ENCODE measurements at regions of chr20 and their contacts with region 1.

Region 1: GRCh38 chr20:44885392-44886265 is at the start of gene YWHAB:
- DNase-seq: peak; percentile 95 to 99 (median 98)
- ATAC-seq: peak; percentile 94
- H3K4me3 ChIP-seq: peak within 1 kb of the TSS; percentile 87 to 90
- H3K4me3 Mint-ChIP-seq: peak within 1 kb of the TSS; percentile 92
- H3K27ac ChIP-seq: peak within 1 kb of the TSS; percentile 88 to 92
- H3K27ac Mint-ChIP-seq: peak within 1 kb of the TSS; percentile 97
- H3K4me1 ChIP-seq: peaks cover 43% of the 10 kb centered on the region
- H3K4me1 Mint-ChIP-seq: peaks cover 71% of the 10 kb centered on the region
- H3K27me3 ChIP-seq: no peaks in the 10 kb centered on the region
- H3K27me3 Mint-ChIP-seq: no peaks in the 10 kb centered on the region
- CTCF ChIP-seq: no peak
- total RNA-seq, gene YWHAB: 124 to 136 TPM

Region 2: DNA sequence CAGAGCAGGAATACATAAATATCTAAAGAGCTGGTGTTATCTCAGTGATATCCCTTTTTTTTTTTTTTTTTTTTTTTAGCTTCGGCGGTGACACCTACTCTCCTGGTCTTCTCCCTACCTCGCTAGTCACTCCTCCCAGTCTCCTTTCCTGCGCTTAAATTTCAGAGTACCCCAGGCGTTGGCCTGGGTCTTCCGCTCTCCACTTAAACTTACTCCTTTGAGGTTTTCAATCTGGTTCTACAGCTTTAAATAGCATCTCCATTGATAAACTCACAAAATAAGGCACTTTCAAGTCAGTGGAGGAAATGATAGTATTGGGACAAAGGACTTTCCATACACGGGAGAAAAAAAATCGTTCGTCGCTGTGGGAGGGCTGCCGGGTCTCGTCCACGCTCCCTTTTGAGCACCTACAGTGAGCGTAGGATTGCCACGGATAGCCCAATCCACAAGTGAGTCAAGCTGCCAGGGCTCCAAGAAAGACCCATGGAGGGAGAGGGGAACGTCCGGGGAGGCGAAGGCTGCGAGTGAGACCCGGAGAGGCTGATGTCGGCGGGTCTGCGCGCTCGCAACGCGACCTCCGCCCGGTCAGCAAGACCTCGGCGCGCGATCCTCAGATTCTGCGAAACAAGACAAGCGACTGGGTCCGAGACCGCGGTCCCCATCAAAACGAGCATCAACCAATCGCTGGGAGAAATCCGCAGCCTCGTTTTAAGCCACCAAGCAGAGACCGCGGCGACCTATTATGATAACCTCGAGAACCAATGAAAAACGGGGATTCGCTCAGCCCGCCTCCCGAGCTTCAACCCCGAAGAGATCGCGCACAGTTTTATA is 1428.6 kb before region 1 on chr20:
- CTCF ChIA-PET with region 1: no interaction called
- POLR2A ChIA-PET with region 1: no interaction called
- intact Hi-C with region 1: loop called (anchors 5 to 10 kb)
- DNase-seq: peak; percentile 68 to 94 (median 87)
- ATAC-seq: peak; percentile 79
- H3K4me3 ChIP-seq: peak overlapping the region; percentile 97 to 100
- H3K4me3 Mint-ChIP-seq: peak overlapping the region; percentile 92
- H3K27ac ChIP-seq: peak overlapping the region; percentile 98 to 100
- H3K27ac Mint-ChIP-seq: peak overlapping the region; percentile 98
- H3K4me1 ChIP-seq: peaks cover 16% of the 10 kb centered on the region
- H3K4me1 Mint-ChIP-seq: peaks cover 36% of the 10 kb centered on the region
- H3K27me3 ChIP-seq: no peaks in the 10 kb centered on the region
- H3K27me3 Mint-ChIP-seq: peaks cover 8% of the 10 kb centered on the region
- CTCF ChIP-seq: no peak

Region 3: DNA sequence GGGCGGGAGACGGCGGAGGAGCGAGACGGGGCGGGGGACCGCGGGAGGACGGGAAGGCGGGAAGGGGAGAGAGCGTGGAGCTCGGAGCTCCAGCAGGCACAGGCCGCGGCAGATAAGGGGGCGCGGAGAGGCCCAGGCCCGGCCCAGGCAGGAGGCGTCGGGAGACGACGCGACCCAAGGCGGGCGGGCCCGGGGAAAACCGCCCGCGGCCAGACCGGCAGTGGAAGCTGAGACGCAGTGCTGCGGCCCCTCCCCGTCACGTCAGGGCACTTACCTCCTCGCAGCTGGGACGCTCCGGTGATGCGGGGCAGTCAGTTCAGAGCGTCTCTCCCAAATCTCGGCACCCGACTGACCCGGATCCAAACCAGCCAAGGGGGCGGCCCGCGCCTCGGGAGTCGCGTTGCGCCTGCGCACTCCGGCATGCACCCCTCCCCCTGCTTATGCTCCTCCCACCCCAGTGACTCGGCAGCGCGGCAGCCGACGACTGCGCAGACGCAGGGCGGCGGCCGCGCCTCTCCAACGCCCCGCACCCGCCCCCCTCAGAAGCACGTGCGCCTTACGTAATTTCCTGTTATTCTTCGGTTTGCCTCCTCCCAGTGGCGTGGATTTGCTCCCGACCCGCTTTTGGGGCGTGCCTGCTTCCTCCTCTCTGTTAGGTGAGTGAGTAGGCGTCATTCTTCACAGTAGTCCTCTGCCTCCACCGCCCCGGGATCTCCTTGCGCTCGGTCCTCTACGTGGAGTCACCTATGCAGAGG is 675.0 kb before region 1 on chr20 and contains the start of gene OSER1:
- CTCF ChIA-PET with region 1: interaction called, 3 read pairs
- POLR2A ChIA-PET with region 1: no interaction called
- intact Hi-C with region 1: loop called (anchors 1 to 2 kb)
- DNase-seq: peak; percentile 97 to 99 (median 98)
- ATAC-seq: peak; percentile 83
- H3K4me3 ChIP-seq: peak within 1 kb of the TSS; percentile 78 to 91
- H3K4me3 Mint-ChIP-seq: peak within 1 kb of the TSS; percentile 96
- H3K27ac ChIP-seq: peak within 1 kb of the TSS; percentile 93 to 96
- H3K27ac Mint-ChIP-seq: peak within 1 kb of the TSS; percentile 99
- H3K4me1 ChIP-seq: peaks cover 43% of the 10 kb centered on the region
- H3K4me1 Mint-ChIP-seq: peaks cover 73% of the 10 kb centered on the region
- H3K27me3 ChIP-seq: no peaks in the 10 kb centered on the region
- H3K27me3 Mint-ChIP-seq: no peaks in the 10 kb centered on the region
- CTCF ChIP-seq: no peak
- total RNA-seq, gene OSER1: 201 to 204 TPM

Region 4: GRCh38 chr20:44521484-44522481 is 363.8 kb before region 1 on chr20 and contains the start of gene SERINC3:
- CTCF ChIA-PET with region 1: no interaction called
- POLR2A ChIA-PET with region 1: no interaction called
- intact Hi-C with region 1: loop called (anchors 5 kb)
- DNase-seq: peak; percentile 96 to 99 (median 98)
- ATAC-seq: peak; percentile 93
- H3K4me3 ChIP-seq: peak within 1 kb of the TSS; percentile 88 to 100
- H3K4me3 Mint-ChIP-seq: peak within 1 kb of the TSS; percentile 86
- H3K27ac ChIP-seq: peak within 1 kb of the TSS; percentile 98 to 100
- H3K27ac Mint-ChIP-seq: peak within 1 kb of the TSS; percentile 96
- H3K4me1 ChIP-seq: peaks cover 52% of the 10 kb centered on the region
- H3K4me1 Mint-ChIP-seq: peaks cover 55% of the 10 kb centered on the region
- H3K27me3 ChIP-seq: no peaks in the 10 kb centered on the region
- H3K27me3 Mint-ChIP-seq: no peaks in the 10 kb centered on the region
- CTCF ChIP-seq: no peak
- total RNA-seq, gene SERINC3: 39.0 to 46.0 TPM

Region 5: DNA sequence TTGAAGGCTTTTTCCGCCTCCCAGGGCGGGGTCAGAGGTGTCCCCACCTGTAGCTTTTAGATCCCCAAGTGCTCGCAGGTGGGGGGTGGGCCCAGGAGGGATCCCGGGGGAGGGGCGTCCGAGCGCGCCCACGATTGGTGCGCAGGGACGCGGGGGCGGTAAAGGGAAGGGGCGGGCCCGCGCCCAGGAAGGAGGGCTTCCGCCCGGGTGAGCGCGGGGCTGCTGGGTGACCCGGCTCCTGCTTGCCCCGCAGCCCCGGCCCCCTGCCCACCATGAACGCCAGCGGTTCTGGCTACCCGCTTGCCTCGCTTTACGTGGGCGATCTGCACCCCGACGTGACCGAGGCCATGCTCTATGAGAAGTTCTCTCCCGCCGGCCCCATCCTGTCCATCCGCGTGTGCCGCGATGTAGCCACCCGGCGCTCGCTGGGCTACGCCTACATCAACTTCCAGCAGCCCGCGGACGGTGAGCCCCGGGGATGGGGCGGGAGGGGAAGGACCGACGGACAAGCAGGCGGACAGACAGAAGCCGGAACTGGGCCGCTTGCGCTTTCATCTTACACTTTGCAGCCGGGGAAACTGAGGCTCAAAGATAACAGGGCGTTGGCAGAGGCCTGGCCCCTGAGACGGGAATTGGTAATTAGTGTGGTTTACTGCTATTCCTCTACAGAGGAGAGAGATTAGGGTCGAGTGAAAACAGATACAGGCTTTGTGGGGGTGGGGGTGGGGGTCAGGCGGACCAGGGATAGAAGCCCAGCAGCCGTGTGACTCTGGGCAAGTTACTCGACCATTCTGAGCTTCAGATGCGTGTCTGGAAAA is 24.5 kb after region 1 on chr20 and contains the start of gene PABPC1L:
- CTCF ChIA-PET with region 1: interaction called, 22 read pairs
- POLR2A ChIA-PET with region 1: interaction called, 6 read pairs
- intact Hi-C with region 1: loop called (anchors 1 to 2 kb)
- DNase-seq: peak; percentile 46 to 89 (median 79)
- ATAC-seq: peak; percentile 99
- H3K4me3 ChIP-seq: peak within 1 kb of the TSS; percentile 66 to 78
- H3K4me3 Mint-ChIP-seq: peak within 1 kb of the TSS; percentile 81
- H3K27ac ChIP-seq: peak within 1 kb of the TSS; percentile 19 to 35
- H3K27ac Mint-ChIP-seq: peak within 1 kb of the TSS; percentile 66
- H3K4me1 ChIP-seq: peaks cover 21% of the 10 kb centered on the region
- H3K4me1 Mint-ChIP-seq: peaks cover 30% of the 10 kb centered on the region
- H3K27me3 ChIP-seq: no peaks in the 10 kb centered on the region
- H3K27me3 Mint-ChIP-seq: no peaks in the 10 kb centered on the region
- CTCF ChIP-seq: no peak
- total RNA-seq, gene PABPC1L: 31.9 to 34.0 TPM

Region 6: DNA sequence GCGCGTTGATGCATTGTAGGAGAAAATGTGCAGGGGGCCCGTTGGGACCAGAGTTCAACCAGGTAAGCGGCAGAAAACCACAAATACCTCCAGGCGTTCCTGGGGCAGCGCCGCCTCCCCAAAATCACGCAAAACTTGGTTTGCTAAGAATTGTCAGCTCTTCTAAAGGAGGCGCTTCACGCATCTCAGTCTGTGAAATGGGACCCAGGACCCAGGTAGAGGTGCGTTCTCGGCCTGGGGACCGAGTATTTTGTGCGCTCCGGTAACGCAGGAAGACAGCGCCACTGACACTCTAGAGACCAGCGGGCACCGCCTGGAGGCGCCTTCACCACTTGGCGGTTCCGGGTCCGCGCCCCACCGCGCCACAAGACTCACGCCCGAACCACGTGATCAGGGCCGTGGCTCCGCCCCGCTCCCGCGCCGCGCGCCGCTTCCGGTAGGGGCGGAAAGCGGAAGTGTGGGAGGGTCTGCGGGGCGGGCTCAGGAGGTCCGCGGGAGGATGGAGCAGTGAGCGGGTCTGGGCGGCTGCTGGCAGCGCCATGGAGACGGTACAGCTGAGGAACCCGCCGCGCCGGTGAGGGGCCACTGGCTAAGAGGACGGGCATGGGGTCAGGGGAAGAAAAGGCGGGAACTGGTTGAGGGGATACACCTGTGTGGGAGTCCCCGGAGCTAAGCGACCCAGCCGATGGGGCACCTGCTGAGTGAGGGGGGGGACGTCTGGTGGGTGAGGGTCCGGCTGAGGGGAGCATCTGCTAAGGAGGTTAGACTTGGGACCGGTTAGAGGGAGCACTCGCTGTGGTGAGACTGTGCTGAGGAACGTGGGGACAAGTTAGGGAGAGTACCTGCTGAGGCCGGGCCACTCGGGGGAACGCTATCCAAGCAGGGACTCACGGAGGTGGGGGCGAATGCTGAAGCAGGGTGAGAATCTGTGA is 80.7 kb after region 1 on chr20 and contains the start of gene STK4:
- CTCF ChIA-PET with region 1: no interaction called
- POLR2A ChIA-PET with region 1: interaction called, 11 read pairs
- intact Hi-C with region 1: loop called (anchors 2 to 5 kb)
- DNase-seq: peak; percentile 90 to 99 (median 96)
- ATAC-seq: peak; percentile 76
- H3K4me3 ChIP-seq: peak within 1 kb of the TSS; percentile 96 to 97
- H3K4me3 Mint-ChIP-seq: peak within 1 kb of the TSS; percentile 91
- H3K27ac ChIP-seq: peak within 1 kb of the TSS; percentile 82 to 93
- H3K27ac Mint-ChIP-seq: peak within 1 kb of the TSS; percentile 89
- H3K4me1 ChIP-seq: peaks cover 28% of the 10 kb centered on the region
- H3K4me1 Mint-ChIP-seq: peaks cover 51% of the 10 kb centered on the region
- H3K27me3 ChIP-seq: no peaks in the 10 kb centered on the region
- H3K27me3 Mint-ChIP-seq: no peaks in the 10 kb centered on the region
- CTCF ChIP-seq: no peak
- total RNA-seq, gene STK4: 253 to 259 TPM

Region 7: DNA sequence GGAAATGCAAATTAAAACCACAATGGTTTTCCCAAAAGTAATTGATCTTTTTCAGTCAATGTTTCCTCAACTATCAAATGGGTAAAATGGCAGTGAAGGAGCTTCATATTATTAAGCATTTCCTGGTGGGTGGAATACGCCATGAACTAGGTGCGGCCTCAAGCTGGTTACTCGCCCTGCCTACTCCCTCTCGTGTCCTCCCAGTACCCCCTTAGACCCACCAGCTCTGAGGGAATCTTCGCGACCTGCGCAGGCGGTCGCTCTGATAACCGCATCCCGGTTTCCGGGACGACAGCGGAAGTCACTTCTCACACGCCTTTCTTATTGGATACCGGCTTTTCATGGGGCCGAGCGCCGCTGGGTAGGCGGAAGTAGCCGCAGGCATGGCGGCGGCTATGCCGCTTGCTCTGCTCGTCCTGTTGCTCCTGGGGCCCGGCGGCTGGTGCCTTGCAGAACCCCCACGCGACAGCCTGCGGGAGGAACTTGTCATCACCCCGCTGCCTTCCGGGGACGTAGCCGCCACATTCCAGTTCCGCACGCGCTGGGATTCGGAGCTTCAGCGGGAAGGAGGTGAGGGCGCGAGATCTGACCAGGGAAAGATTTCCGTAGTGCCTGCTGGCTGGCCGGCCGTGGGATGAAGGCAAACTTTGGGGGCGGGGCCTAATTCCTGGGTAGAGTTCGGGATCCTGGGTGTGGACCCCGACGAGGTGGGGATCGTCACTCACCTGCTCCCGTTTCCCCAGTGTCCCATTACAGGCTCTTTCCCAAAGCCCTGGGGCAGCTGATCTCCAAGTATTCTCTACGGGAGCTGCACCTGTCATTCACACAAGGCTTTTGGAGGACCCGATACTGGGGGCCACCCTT is 530.4 kb after region 1 on chr20 and contains the start of gene PIGT:
- CTCF ChIA-PET with region 1: no interaction called
- POLR2A ChIA-PET with region 1: no interaction called
- intact Hi-C with region 1: loop called (anchors 5 to 10 kb)
- DNase-seq: peak; percentile 77 to 98 (median 89)
- ATAC-seq: peak; percentile 96
- H3K4me3 ChIP-seq: peak within 1 kb of the TSS; percentile 87 to 98
- H3K4me3 Mint-ChIP-seq: peak within 1 kb of the TSS; percentile 94
- H3K27ac ChIP-seq: peak within 1 kb of the TSS; percentile 70 to 90
- H3K27ac Mint-ChIP-seq: peak within 1 kb of the TSS; percentile 96
- H3K4me1 ChIP-seq: peaks cover 15% of the 10 kb centered on the region
- H3K4me1 Mint-ChIP-seq: peaks cover 40% of the 10 kb centered on the region
- H3K27me3 ChIP-seq: no peaks in the 10 kb centered on the region
- H3K27me3 Mint-ChIP-seq: no peaks in the 10 kb centered on the region
- CTCF ChIP-seq: no peak
- total RNA-seq, gene PIGT: 213 to 230 TPM

Measured in CD8-positive, alpha-beta T cell (primary cell).